ENCODE measurements at regions of chr7 and their contacts with region 1.

Region 1: DNA sequence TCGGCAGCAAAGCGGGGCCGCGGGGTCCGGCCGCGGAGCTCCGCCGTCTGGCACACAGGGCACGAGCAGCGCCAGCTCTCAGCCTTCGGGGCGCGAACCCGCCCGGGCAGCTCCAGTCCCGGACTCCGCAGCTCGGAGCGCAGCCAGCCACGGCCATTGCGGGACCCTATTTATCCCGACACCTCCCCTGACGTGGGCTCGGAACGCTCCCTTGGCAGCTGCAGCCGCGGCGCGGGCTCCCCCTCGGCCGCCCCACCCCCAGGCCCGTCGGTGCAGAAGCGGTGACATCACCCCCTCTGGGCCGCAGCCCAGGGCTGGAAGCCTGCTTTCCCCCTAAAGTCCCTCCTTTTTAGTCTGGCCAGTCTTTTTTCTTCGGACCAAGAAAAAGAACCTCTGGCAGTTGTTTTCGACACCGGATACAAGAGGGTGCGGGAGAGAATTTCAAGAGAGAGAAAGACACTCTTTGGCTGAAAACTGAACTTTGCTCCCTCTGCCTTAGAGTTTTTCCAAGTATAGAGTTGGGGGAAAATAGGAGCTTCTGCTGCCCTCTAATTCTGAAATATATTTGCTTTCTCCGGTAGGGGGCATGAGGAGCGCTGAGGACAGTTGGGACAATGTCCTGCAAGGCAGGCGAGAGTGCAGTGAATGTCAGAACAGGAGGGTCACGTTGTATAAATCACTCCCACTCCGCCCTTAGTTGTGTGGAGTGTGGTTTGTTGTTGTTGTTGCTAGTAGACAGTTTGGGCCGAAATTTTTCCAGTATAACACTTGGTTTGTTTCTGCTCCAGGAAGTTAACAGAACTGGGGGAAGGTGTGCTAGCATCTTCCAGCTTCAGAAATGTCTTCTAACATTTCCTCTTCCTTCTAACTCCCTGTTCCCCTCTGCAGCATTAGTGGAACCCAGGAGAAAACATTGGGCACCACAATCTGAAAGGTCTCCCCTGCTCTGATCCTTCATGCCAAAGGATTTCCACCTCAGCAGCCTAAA is at the start of gene SFRP4:
- DNase-seq: peak; percentile 68
- ATAC-seq: peak; percentile 64
- total RNA-seq, gene SFRP4: 0.32 TPM

Region 2: GRCh38 chr7:37942934-37943610 is 26.1 kb after region 1 on chr7:
- intact Hi-C with region 1: loop called (anchors 1 kb)
- DNase-seq: peak; percentile 88
- ATAC-seq: peak; percentile 96

Region 3: DNA sequence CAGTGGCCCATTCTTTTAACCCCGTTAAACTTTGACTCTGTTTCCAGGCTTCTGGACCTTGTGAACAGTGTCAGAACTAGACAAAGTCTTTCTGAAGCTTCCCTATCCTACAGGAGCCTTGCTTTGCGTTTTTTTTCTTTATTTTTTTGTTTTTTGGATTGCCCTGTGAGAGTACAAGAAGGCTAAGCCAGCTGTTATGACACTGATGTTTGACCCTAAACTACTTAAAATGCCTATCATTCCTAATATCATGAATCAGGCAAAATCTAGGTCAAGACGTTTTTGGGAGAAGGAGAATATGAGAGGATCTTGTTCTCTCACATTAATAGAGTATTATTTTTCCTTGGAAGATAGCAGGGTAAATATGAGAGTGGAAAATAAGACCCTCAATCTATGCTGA is 83.3 kb after region 1 on chr7:
- intact Hi-C with region 1: loop called (anchors 10 kb)
- DNase-seq: no peak
- ATAC-seq: no peak

Region 4: GRCh38 chr7:38178004-38178694 is 261.2 kb after region 1 on chr7 and contains the start of gene STARD3NL:
- intact Hi-C with region 1: loop called (anchors 5 kb)
- DNase-seq: peak; percentile 96
- ATAC-seq: peak; percentile 99
- total RNA-seq, gene STARD3NL: 22.9 TPM

Region 5: GRCh38 chr7:38222481-38223096 is 305.6 kb after region 1 on chr7:
- intact Hi-C with region 1: loop called (anchors 5 kb)
- DNase-seq: no peak
- ATAC-seq: peak; percentile 69

Measured in Right ventricle myocardium inferior (tissue), 1 donor.